CD4-positive, alpha-beta T cell (primary cell): ENCODE measurements at regions of chr11 and their contacts with region 1.

Region 1: DNA sequence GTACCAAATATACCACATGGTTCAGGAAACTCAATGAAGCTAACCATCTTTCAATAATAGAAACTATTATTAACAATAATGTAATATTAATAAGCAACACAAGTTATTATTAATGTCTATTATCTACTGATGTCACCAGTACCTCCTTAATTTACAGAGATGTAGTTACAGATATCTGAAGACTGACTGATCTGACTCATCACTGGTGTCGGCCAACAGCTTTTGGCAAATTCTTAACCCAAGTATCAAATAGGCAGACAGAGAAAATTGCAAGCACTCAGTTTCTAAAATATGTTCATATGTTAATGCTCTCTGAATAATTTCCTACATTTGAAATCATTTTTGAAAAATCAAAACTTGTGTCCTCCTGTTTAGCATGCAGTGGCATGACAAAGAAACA is 100.4 kb upstream of the DDI1 start:
- DNase-seq: no peak
- ATAC-seq: no peak
- H3K4me3 ChIP-seq: no peak overlapping the region
- H3K4me3 Mint-ChIP-seq: no peak overlapping the region
- H3K27ac ChIP-seq: no peak overlapping the region
- H3K27ac Mint-ChIP-seq: no peak overlapping the region
- H3K4me1 ChIP-seq: no peaks in the 10 kb centered on the region
- H3K4me1 Mint-ChIP-seq: no peaks in the 10 kb centered on the region
- H3K27me3 ChIP-seq: no peaks in the 10 kb centered on the region
- H3K27me3 Mint-ChIP-seq: no peaks in the 10 kb centered on the region
- CTCF ChIP-seq: no peak

Region 2: DNA sequence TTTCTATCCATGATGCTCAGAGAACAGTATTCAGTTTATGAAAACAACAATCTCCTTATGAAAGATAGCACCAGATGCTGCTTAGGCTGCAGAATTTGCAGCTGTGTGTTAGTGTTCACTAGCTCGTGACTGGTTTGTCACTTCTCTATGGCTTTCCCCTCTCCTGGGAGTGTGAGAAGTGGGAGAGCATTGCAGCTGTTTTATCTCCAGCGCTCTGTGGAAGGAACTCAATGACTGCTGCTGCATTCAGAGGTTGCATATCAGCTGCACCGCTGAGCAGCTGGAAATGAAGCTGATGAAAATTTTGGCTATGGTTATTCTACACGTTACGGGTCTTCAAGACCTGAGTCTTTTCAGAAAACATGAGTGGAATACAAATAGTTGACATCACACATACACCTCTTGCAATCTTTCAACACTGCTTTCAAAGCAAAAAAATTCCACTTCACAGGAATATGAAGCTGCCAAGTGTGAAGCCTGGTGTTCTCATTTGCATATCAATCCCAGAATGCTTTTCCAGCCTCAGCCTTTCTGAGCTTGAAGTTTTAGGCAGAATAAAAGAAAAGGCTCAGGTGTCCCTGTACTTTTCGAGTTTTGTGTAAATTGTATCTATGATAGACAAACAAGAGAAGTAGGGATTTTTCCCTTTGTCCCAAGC is 48.9 kb before region 1 on chr11:
- CTCF ChIA-PET with region 1: no interaction called
- POLR2A ChIA-PET with region 1: no interaction called
- intact Hi-C with region 1: loop called in 1 of 2 experiments (anchors 2 kb)
- DNase-seq: no peak
- ATAC-seq: no peak
- H3K4me3 ChIP-seq: no peak overlapping the region
- H3K4me3 Mint-ChIP-seq: no peak overlapping the region
- H3K27ac ChIP-seq: no peak overlapping the region
- H3K27ac Mint-ChIP-seq: no peak overlapping the region
- H3K4me1 ChIP-seq: no peaks in the 10 kb centered on the region
- H3K4me1 Mint-ChIP-seq: no peaks in the 10 kb centered on the region
- H3K27me3 ChIP-seq: no peaks in the 10 kb centered on the region
- H3K27me3 Mint-ChIP-seq: no peaks in the 10 kb centered on the region
- CTCF ChIP-seq: no peak